ENCODE measurements at regions of chr14 and their contacts with region 1.

Region 1: GRCh38 chr14:60064491-60065072 is 27.1 kb upstream of the PCNX4 start:
- DNase-seq: no peak
- ATAC-seq: no peak

Region 2: DNA sequence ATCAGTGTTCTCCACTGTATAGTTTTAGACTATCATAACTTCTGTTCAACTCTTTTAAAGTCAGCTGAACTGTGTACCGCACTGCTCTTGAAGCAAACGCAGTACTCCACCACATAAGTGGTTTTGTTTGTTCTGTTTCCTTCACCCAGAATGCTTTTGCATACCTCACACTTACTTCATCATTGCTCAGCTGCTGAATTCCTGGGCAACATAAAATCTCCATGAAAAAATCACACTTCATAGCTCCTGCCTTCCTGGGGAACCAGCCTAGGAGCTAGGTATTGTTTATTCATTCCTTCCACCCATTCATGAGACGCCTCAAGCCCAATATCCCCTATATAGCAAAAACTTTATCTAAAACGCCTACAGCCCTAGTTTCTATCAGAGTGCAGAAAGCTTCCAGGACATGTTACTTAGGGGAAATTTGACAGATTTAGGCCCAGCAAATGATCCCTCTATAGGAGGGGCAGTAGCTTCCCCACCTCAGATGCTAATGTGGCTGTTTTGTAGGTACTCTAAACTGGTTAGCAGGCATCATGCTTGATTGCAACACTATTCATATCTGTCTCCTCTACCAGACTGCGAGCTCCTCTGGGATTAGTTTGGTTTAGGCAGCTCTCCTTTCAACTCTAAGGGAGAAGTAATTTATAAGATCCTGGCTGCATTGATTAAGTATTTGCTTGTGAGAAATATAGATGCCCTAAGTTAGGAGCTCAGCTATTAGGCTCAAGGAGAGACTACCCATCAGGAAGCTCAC is 100.2 kb before region 1 on chr14:
- intact Hi-C with region 1: loop called in 1 of 2 experiments (anchors 5 kb)
- DNase-seq: no peak
- ATAC-seq: peak in 1 of 2 donors; percentile 26